GM12878 (cell line): ENCODE measurements at regions of chr22 and their contacts with region 1.

Region 1: DNA sequence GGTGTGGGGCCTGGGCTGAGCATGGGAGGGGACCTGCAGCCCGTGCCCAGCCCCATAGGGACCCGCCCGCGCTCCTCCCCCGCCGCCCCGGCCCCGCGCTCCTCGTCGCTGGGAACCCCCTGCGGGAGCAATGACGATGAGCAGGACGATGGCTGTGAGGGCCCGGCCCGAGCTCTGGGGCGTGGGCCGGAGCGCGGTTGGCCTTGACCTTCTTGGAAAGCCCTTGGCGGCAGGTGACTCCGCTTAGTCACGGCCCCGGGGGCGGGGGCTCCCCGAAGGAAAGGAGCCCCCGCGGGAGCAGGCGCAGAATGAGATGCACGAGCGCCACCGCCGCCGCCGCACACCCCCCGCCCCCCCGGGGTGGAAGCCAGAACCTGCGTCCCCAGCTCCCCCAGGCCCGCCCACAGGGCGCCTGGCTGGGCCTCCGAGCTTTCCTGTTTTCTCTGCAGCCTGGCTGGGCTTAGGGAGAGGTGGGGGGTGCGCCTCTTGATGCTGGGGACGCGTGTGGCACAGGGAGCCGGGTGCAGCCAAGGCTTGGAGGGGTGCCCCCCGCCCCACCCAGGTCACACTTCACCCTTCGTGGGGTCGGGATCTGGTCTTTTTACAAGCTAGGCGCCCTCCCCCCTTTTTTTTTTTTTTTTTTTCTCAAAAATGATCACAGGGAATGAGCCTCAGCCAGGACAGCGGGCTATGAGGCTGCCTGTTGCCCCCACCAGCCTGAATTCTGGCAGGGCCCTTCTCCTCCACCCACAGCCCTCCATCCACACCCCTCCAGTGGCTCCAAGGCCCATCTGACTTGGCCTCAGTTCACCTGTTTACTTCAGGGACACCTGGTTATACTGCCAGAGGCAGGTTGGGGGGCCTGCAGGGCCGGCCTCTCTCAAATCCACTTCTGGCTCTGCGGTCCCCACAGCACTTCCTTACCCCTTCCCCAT is 17.9 kb downstream of the CRELD2 start:
- DNase-seq: peak; percentile 69
- ATAC-seq: peak; percentile 87
- H3K4me3 ChIP-seq: peak overlapping the region; percentile 57
- H3K27ac ChIP-seq: peak overlapping the region; percentile 69
- H3K4me1 ChIP-seq: peaks cover 43% of the 10 kb centered on the region
- H3K27me3 ChIP-seq: no peaks in the 10 kb centered on the region
- CTCF ChIP-seq: no peak
- EP300 ChIP-seq: peak in 1 of 2 experiments; percentile 77; a peak in 2 of 4 replicates
- POLR2A ChIP-seq: peak; percentile 68
- RAD21 ChIP-seq: no peak

Region 2: DNA sequence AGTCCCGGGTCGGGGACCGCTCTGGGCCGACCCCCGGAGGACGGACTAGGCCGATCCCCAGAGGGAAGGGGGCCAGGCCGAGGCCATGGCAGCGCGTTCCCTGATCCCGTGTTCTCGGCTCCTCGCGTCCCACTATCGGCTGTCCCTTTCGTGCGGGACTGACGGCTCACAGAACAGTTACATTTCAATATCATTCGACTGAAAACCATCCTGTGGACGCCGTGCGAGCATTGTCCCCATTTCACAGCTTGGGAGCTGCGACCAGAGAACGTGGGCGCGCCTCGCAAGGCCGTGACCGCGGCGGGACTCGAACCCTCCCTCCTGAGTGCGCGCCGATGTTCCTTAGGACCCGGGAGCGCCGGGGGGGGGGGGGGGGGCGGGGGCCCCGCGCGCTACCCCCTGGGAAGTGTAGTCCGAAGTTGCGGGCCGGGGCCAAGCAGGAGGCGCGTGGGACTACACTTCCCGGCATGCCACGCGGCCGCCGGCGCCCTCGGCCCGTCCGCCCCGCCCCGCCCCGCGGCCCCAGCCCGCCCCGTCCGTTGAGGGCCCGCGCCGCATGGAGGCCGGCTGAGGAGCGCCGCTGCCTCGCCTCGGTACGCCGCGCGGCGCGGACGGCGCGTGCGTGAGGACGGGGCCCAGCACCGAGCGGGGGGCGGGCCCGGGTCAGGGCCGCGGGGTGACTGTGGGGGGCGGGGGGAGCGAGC is 249.3 kb after region 1 on chr22 and contains the start of gene TRABD:
- CTCF ChIA-PET with region 1: no interaction called
- POLR2A ChIA-PET with region 1: interaction called, 4 read pairs
- RAD21 ChIA-PET with region 1: interaction called, 3 read pairs
- SMC1A ChIA-PET with region 1: no interaction called
- in situ Hi-C with region 1: no loop called
- intact Hi-C with region 1: loop called (anchors 10 kb)
- DNase-seq: no peak
- ATAC-seq: peak; percentile 63
- H3K4me3 ChIP-seq: peak within 1 kb of the TSS; percentile 84
- H3K27ac ChIP-seq: peak within 1 kb of the TSS; percentile 89
- H3K4me1 ChIP-seq: peaks cover 35% of the 10 kb centered on the region
- H3K27me3 ChIP-seq: no peaks in the 10 kb centered on the region
- CTCF ChIP-seq: no peak
- EP300 ChIP-seq: no peak
- POLR2A ChIP-seq: peak; percentile 78
- RAD21 ChIP-seq: no peak
- polyA plus RNA-seq, gene TRABD: 0.43 to 2.2 TPM